Panc1 (cell line): ENCODE measurements at regions of chr13 and their contacts with region 1.

Region 1: GRCh38 chr13:31236211-31236786 is 36.5 kb downstream of the B3GLCT start:
- DNase-seq: no peak
- ATAC-seq: no peak
- H3K4me3 ChIP-seq: no peak overlapping the region
- H3K27ac ChIP-seq: no peak overlapping the region
- H3K4me1 ChIP-seq: no peaks in the 10 kb centered on the region
- H3K27me3 ChIP-seq: no peaks in the 10 kb centered on the region
- CTCF ChIP-seq: peak; percentile 66; the same call in 1 of the 2 replicates

Region 2: GRCh38 chr13:31424117-31424729 is 187.9 kb after region 1 on chr13:
- CTCF ChIA-PET with region 1: no interaction called
- POLR2A ChIA-PET with region 1: no interaction called
- in situ Hi-C with region 1: no loop called
- intact Hi-C with region 1: loop called (anchors 1 kb)
- DNase-seq: peak; percentile 39
- ATAC-seq: peak; percentile 100
- H3K4me3 ChIP-seq: no peak overlapping the region
- H3K27ac ChIP-seq: no peak overlapping the region
- H3K4me1 ChIP-seq: no peaks in the 10 kb centered on the region
- H3K27me3 ChIP-seq: peaks cover 2% of the 10 kb centered on the region; the same call in 1 of the 2 replicates
- CTCF ChIP-seq: peak; percentile 87

Region 3: GRCh38 chr13:31733066-31733465 is 496.8 kb after region 1 on chr13:
- CTCF ChIA-PET with region 1: no interaction called
- POLR2A ChIA-PET with region 1: no interaction called
- in situ Hi-C with region 1: no loop called
- intact Hi-C with region 1: loop called (anchors 10 kb)
- DNase-seq: no peak
- ATAC-seq: no peak
- H3K4me3 ChIP-seq: no peak overlapping the region
- H3K27ac ChIP-seq: no peak overlapping the region
- H3K4me1 ChIP-seq: no peaks in the 10 kb centered on the region
- H3K27me3 ChIP-seq: no peaks in the 10 kb centered on the region
- CTCF ChIP-seq: no peak

Region 4: GRCh38 chr13:32153056-32153455 is 916.8 kb after region 1 on chr13:
- CTCF ChIA-PET with region 1: no interaction called
- POLR2A ChIA-PET with region 1: interaction called, 11 read pairs
- in situ Hi-C with region 1: no loop called
- intact Hi-C with region 1: no loop called
- DNase-seq: no peak
- ATAC-seq: no peak
- H3K4me3 ChIP-seq: no peak overlapping the region
- H3K27ac ChIP-seq: no peak overlapping the region
- H3K4me1 ChIP-seq: no peaks in the 10 kb centered on the region
- H3K27me3 ChIP-seq: no peaks in the 10 kb centered on the region
- CTCF ChIP-seq: no peak